Activated T-helper 1 cell treated with anti-CD3 and anti-CD28 coated beads, Interleukin-12 subunit alpha, Interleukin-12 subunit beta, Interleukin-2, Interleukin-4 antibody, amounts not matched to agents 30 ng/mL and 10 ng/mL and 1 ng/mL, durations not matched to agents 14 hours and 24 hours and 36 hours (primary cell): ENCODE measurements at regions of chr2 and their contacts with region 1.

Region 1: DNA sequence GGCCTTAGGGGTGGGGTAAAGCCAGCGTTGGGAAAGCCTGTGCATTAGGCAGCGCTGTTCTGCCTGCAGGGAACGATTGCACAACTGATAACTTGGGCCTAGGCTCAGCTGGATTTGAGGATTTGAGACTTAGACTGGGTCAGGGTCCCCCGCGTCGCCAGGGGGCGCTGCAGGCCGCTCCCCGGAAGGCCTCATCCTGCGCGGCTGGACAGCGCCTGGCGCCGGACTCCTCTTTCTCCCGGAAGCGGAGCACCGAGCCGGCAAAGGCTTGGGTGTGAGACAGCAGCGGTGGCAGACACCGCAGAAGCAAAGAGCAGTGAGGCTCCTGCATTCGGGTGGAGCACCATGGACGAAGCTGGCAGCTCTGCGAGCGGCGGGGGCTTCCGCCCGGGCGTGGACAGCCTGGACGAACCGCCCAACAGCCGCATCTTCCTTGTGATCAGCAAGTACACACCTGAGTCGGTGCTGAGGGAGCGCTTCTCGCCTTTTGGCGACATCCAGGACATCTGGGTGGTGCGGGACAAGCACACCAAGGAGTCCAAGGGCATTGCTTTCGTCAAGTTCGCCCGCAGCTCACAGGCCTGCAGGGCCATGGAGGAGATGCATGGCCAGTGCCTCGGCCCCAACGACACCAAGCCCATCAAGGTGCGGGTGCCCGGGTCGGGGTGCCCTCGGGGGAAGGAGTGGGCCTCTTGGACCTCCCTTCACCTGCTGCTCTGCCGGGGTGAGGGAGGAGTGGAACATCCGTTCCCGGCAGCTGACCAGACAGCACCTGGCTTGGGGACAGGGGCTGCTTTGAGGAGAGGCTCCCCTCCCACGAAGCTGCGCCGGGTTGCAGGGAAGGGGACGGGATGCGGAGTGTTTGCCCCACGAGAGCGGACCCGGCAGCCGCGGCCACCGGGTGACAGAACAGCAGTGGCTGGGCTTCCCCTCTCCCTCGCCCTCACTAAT is at the start of gene RBM45:
- DNase-seq: peak; percentile 83
- H3K4me3 Mint-ChIP-seq: peak within 1 kb of the TSS; percentile 87
- H3K27ac Mint-ChIP-seq: peak within 1 kb of the TSS; percentile 75
- H3K4me1 Mint-ChIP-seq: peaks cover 33% of the 10 kb centered on the region
- H3K27me3 Mint-ChIP-seq: no peaks in the 10 kb centered on the region
- total RNA-seq, gene RBM45: 18.6 and 21.9 TPM in 2 replicates

Region 2: GRCh38 chr2:177212106-177212890 is 900.2 kb before region 1 on chr2 and contains the start of gene HNRNPA3:
- intact Hi-C with region 1: loop called (anchors 2 kb)
- DNase-seq: peak; percentile 100
- H3K4me3 Mint-ChIP-seq: peak within 1 kb of the TSS; percentile 97
- H3K27ac Mint-ChIP-seq: peak within 1 kb of the TSS; percentile 99
- H3K4me1 Mint-ChIP-seq: peaks cover 58% of the 10 kb centered on the region
- H3K27me3 Mint-ChIP-seq: no peaks in the 10 kb centered on the region
- total RNA-seq, gene HNRNPA3: 326 and 333 TPM in 2 replicates

Region 3: GRCh38 chr2:177618255-177619253 is 493.9 kb before region 1 on chr2:
- intact Hi-C with region 1: loop called (anchors 2 kb)
- DNase-seq: peak; percentile 91
- H3K4me3 Mint-ChIP-seq: peak overlapping the region; percentile 94
- H3K27ac Mint-ChIP-seq: peak overlapping the region; percentile 99
- H3K4me1 Mint-ChIP-seq: peaks cover 13% of the 10 kb centered on the region
- H3K27me3 Mint-ChIP-seq: peaks cover 4% of the 10 kb centered on the region

Region 4: DNA sequence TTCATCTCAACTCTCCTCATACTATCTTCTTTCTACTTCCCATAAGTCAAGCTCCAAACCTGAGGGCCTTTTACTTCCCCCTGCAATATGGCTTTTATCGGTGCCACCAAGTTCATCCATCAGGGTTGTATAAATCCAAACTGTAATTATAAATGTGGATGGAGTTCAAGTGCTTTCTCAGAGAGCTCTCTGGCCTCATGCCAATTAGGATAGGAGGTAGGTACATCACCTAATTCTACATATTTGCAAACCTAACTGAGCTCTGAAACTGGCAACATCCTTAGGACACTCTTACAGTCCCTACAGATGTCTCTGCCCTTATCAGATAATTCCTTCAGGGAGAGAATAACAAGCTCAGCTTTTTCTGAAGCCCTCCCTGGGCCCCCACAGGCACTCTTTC is 22.0 kb before region 1 on chr2:
- intact Hi-C with region 1: no loop called
- DNase-seq: no peak
- H3K4me3 Mint-ChIP-seq: no peak overlapping the region
- H3K27ac Mint-ChIP-seq: no peak overlapping the region
- H3K4me1 Mint-ChIP-seq: no peaks in the 10 kb centered on the region
- H3K27me3 Mint-ChIP-seq: peaks cover 11% of the 10 kb centered on the region

Region 5: GRCh38 chr2:178280244-178280852 is 167.9 kb after region 1 on chr2:
- intact Hi-C with region 1: loop called (anchors 1 kb)
- DNase-seq: peak; percentile 12
- H3K4me3 Mint-ChIP-seq: no peak overlapping the region
- H3K27ac Mint-ChIP-seq: no peak overlapping the region
- H3K4me1 Mint-ChIP-seq: no peaks in the 10 kb centered on the region
- H3K27me3 Mint-ChIP-seq: peaks cover 10% of the 10 kb centered on the region

Region 6: DNA sequence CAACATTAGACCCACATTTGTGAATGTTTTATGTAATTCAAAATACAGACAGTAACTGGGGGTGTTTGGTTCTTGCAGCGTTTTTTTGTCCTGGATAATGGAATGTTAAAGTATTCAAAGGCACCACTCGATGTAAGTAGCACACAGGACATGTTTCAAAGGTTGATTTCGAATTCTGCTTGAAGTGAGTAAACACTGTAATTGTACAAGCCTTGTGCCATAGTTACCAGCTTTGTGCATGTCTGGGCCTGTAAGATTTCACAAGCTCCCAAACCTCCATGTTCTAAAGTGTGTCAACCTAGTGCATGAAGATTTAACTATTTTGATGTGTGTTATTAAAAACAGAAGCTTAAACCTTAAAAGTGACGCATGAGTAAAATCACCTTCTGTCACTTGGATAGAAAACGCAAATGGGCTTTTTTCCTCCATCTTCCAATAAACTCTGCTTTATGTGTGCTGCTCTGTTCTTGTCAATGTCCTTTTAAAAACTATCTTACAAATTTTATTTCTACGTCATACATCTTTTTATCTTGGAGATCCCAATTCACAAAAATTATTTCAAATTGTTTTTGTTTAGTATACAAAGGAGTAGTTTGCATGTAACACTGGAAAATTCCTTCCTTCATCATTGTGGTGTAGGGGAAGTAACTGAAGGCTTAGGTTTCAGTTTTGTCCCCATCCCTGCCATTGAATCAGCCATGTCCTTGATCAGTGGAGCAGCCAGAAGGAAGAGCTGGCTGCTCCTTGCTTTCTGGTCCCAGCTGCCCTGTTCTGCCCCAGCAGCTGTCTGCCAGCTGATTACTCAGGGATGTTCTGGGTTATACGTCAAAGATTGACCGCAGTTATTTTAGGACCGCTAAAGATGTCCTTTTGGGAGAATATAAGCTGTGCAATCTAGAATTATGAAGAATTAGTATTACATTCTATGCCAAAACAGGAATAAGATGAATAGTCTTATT is 219.3 kb after region 1 on chr2:
- intact Hi-C with region 1: no loop called
- DNase-seq: no peak
- H3K4me3 Mint-ChIP-seq: no peak overlapping the region
- H3K27ac Mint-ChIP-seq: no peak overlapping the region
- H3K4me1 Mint-ChIP-seq: no peaks in the 10 kb centered on the region
- H3K27me3 Mint-ChIP-seq: peaks cover 3% of the 10 kb centered on the region

Region 7: GRCh38 chr2:178397002-178397605 is 284.6 kb after region 1 on chr2:
- intact Hi-C with region 1: loop called (anchors 5 kb)
- DNase-seq: no peak
- H3K4me3 Mint-ChIP-seq: no peak overlapping the region
- H3K27ac Mint-ChIP-seq: no peak overlapping the region
- H3K4me1 Mint-ChIP-seq: peaks cover 19% of the 10 kb centered on the region
- H3K27me3 Mint-ChIP-seq: peaks cover 6% of the 10 kb centered on the region

Region 8: DNA sequence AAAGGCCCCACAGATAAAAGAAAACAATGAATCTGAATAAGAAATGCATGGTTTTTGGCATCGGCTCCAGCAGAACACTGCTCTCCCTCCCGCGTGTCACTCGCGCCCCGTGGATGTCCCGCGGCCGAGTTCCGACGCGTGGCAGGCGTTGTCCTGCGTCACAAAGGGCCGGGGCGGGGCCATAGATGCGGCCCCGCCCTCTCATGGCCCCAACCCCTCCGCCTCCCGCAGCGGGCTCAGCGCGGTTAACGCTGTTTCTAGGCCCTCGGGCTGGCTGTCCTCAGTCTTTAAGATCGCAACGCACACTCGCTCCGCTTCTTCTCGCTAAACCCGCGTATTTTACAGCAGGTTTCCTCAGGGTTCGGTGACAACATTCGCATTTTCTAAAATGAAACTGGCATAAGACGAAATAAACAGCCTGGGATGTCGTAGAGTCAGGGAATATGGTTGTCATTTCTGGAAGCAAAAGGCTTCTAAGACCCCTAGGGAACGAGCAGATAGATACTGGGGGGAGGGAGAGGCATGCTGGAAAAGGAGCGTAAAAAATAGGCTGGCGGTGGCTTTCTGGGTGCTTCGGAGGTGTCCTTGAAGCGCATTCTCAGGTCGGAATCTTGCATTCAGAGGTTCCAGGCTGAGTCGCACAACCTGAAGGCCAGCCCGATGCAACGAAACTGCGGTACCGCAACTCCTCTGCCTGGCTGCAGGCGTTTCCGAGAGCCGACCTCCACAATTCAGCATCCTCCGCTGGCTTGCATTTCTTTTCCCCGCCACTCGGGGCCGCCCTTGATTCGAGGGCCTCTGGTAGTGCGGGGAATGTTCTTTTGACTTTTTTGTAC is 366.2 kb after region 1 on chr2 and contains the start of gene FKBP7:
- intact Hi-C with region 1: loop called (anchors 2 kb)
- DNase-seq: peak; percentile 75
- H3K4me3 Mint-ChIP-seq: peak within 1 kb of the TSS; percentile 95
- H3K27ac Mint-ChIP-seq: peak within 1 kb of the TSS; percentile 99
- H3K4me1 Mint-ChIP-seq: peaks cover 39% of the 10 kb centered on the region
- H3K27me3 Mint-ChIP-seq: no peaks in the 10 kb centered on the region
- total RNA-seq, gene FKBP7: 2.9 and 4.5 TPM in 2 replicates

Region 9: DNA sequence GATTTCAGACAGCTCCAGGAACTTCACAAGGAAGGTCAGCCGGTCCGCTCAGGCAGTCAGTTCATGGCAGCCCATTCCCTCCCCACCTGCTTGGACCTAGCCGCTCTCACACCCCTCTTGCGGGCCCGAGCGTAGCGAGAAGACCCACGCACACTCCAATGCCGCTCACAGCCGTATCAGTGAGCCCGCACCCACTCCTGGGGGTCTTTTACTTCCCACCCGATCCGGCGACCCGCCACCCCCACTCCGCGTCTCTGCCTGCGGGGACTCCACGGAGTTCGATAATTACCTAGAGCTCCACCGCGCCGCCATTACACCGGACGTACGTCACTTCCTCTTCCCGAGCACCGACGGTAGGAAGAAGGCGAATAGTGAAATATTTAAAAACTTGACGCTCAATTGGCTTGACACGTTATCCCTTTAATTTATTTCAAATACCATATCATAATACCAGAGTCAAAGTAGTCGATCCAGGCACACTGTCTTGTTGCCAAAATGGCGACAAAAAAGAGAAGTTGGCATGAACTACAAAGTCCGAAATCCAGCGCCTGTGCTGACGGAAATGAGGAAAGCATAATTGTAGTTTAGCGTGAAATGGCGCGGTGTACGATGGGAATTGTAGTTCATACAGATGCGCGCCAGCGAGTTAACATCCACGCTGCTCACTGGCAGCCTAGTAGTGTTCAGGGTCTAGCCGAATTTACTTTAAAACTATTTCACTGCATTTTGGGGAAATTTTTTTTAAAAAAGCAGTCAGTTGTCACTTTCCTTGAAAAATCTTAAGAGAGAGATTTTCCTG is 1894.5 kb after region 1 on chr2 and contains the start of gene CWC22:
- intact Hi-C with region 1: loop called (anchors 2 kb)
- DNase-seq: peak; percentile 79
- H3K4me3 Mint-ChIP-seq: peak within 1 kb of the TSS; percentile 94
- H3K27ac Mint-ChIP-seq: peak within 1 kb of the TSS; percentile 97
- H3K4me1 Mint-ChIP-seq: peaks cover 26% of the 10 kb centered on the region
- H3K27me3 Mint-ChIP-seq: no peaks in the 10 kb centered on the region
- total RNA-seq, gene CWC22: 29.6 and 30.9 TPM in 2 replicates